Stomach (tissue), 19 donors: ENCODE measurements at regions of chr10 and their contacts with region 1.

Region 1: DNA sequence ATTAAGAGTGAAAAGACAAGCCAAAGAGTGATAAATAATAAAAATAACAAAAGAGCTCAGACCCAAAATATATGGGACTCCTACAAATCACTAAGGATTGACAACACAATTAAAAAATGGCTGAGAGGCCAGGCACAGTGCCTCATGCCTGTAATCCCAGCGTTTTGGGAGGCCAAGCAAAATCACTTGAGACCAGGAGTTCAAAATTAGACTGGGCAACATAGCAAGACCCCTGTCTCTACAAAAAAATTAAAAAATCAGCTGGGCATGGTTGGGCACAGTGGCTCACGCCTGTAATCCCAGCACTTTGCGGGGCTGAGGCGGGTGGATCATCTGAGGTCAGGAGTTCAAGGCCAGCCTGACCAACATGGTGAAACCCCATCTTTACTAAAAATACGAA is 137.3 kb downstream of the IDE start:
- DNase-seq: no peak
- H3K4me3 ChIP-seq: no peak overlapping the region
- H3K27ac ChIP-seq: no peak overlapping the region
- H3K4me1 ChIP-seq: no peaks in the 10 kb centered on the region
- H3K27me3 ChIP-seq: no peaks in the 10 kb centered on the region
- CTCF ChIP-seq: no peak
- EP300 ChIP-seq: no peak
- POLR2A ChIP-seq: no peak

Region 2: GRCh38 chr10:92082583-92083280 is 353.9 kb before region 1 on chr10:
- intact Hi-C with region 1: loop called (anchors 5 kb)
- DNase-seq: no peak
- H3K4me3 ChIP-seq: no peak overlapping the region
- H3K27ac ChIP-seq: no peak overlapping the region
- H3K4me1 ChIP-seq: peaks cover 0 to 24% (median 11%) of the 10 kb centered on the region in 4 donors
- H3K27me3 ChIP-seq: no peaks in the 10 kb centered on the region
- CTCF ChIP-seq: no peak
- EP300 ChIP-seq: no peak
- POLR2A ChIP-seq: no peak

Region 3: DNA sequence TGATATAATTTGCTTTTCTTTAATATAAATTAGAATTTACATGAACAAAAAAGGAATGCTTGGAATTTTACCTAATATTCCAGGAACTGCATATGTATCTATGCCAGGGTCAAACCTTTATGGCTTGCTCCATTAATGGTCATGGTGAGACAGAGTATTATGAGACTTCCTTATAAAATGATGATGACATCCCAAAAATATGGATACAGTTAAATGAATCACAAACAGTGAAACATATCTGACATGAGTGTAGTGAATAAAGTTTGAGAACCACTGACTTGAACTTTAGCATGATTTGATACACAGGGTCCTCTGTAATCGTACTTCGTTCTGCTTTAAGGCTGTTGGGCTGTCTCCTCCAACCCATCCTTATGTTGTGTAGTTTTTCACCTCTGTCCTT is 93.8 kb before region 1 on chr10:
- intact Hi-C with region 1: no loop called
- DNase-seq: no peak
- H3K4me3 ChIP-seq: no peak overlapping the region
- H3K27ac ChIP-seq: no peak overlapping the region
- H3K4me1 ChIP-seq: no peaks in the 10 kb centered on the region
- H3K27me3 ChIP-seq: no peaks in the 10 kb centered on the region
- CTCF ChIP-seq: no peak
- EP300 ChIP-seq: no peak
- POLR2A ChIP-seq: no peak

Region 4: GRCh38 chr10:92662848-92663247 is 226.2 kb after region 1 on chr10:
- intact Hi-C with region 1: no loop called
- DNase-seq: no peak
- H3K4me3 ChIP-seq: no peak overlapping the region
- H3K27ac ChIP-seq: no peak overlapping the region
- H3K4me1 ChIP-seq: no peaks in the 10 kb centered on the region
- H3K27me3 ChIP-seq: no peaks in the 10 kb centered on the region
- CTCF ChIP-seq: no peak
- EP300 ChIP-seq: no peak
- POLR2A ChIP-seq: no peak

Region 5: GRCh38 chr10:93702211-93703001 is 1265.8 kb after region 1 on chr10 and contains the start of gene FRA10AC1:
- intact Hi-C with region 1: no loop called
- DNase-seq: peak; percentile 95 to 97
- H3K4me3 ChIP-seq: peak within 1 kb of the TSS; percentile 57 to 68 (median 59)
- H3K27ac ChIP-seq: peak within 1 kb of the TSS; percentile 76 to 93 (median 86)
- H3K4me1 ChIP-seq: peaks cover 9 to 33% (median 19%) of the 10 kb centered on the region in 4 donors
- H3K27me3 ChIP-seq: no peaks in the 10 kb centered on the region
- CTCF ChIP-seq: peak in 4 of 7 experiments; percentile 33 to 56 (median 50)
- EP300 ChIP-seq: peak; percentile 18
- POLR2A ChIP-seq: peak in 1 of 4 donors; percentile 28
- total RNA-seq, gene FRA10AC1: 1.2 to 42.0 (median 5.3) TPM